ENCODE measurements at regions of chr6 and their contacts with region 1.

Region 1: GRCh38 chr6:70369332-70369950 is 43.9 kb upstream of the FAM135A start:
- DNase-seq: peak; percentile 78
- H3K4me3 ChIP-seq: no peak overlapping the region
- H3K27ac ChIP-seq: no peak overlapping the region
- H3K4me1 ChIP-seq: no peaks in the 10 kb centered on the region
- H3K27me3 ChIP-seq: no peaks in the 10 kb centered on the region
- CTCF ChIP-seq: peak; percentile 68 to 87 (median 74)
- EP300 ChIP-seq: no peak
- POLR2A ChIP-seq: no peak

Region 2: DNA sequence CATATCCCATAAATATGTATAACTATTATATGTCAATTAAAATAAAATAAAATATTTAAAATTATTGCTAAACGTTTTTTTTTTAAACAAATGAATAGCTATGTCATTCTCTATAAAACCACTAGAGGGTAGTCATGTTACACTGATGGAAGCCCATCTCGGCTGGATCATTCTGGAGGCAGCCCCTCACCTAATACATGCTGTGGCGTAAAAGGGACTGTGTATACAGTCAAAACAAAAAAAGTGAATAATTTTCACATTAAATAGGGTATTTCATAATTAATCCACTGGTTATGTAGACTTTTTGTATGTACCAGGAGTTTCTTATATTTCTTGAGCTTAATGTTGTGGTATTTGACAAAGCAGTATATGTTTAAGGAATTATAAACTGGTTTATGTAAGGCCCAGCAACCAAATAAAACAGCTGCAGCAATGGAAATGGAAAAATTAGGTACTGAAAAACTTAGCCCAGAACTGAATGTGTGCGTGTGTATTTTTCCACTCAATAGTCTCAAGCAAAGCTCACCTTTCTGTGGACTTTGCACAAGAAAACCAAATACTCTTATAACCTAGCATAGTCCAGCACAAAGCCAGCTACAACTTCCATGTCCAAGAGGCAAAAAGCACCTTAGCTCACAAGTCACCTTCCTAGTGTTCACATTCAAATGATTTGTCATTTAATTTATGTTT is 148.3 kb before region 1 on chr6:
- intact Hi-C with region 1: loop called (anchors 2 kb)
- DNase-seq: no peak
- H3K4me3 ChIP-seq: no peak overlapping the region
- H3K27ac ChIP-seq: no peak overlapping the region
- H3K4me1 ChIP-seq: no peaks in the 10 kb centered on the region
- H3K27me3 ChIP-seq: no peaks in the 10 kb centered on the region
- CTCF ChIP-seq: peak; percentile 23 to 74 (median 54)
- EP300 ChIP-seq: no peak
- POLR2A ChIP-seq: no peak

Region 3: DNA sequence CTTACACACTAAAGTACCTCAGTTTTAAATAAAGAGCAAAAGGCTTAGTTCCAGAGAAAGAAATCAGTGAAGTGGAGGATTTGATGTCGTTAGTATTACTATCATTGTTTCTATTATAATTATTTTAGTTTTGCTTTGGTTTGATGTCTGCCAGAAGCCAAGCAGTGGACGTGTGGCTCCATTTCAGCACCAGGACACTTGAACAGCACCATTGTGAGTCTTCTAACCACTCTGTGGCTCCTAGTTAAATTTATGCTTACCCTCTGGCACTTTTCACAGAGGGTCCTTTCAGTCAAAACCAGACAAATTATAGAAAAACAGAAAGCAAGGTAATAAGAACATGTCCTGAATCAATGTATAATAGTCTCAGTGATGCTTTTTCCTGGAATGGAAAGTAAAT is 70.0 kb before region 1 on chr6:
- intact Hi-C with region 1: no loop called
- DNase-seq: no peak
- H3K4me3 ChIP-seq: no peak overlapping the region
- H3K27ac ChIP-seq: no peak overlapping the region
- H3K4me1 ChIP-seq: no peaks in the 10 kb centered on the region
- H3K27me3 ChIP-seq: no peaks in the 10 kb centered on the region
- CTCF ChIP-seq: no peak
- EP300 ChIP-seq: no peak
- POLR2A ChIP-seq: no peak

Region 4: GRCh38 chr6:70310063-70310694 is 59.3 kb before region 1 on chr6:
- intact Hi-C with region 1: loop called (anchors 2 kb)
- DNase-seq: no peak
- H3K4me3 ChIP-seq: no peak overlapping the region
- H3K27ac ChIP-seq: no peak overlapping the region
- H3K4me1 ChIP-seq: no peaks in the 10 kb centered on the region
- H3K27me3 ChIP-seq: no peaks in the 10 kb centered on the region
- CTCF ChIP-seq: peak in 2 of 4 experiments; percentile 28 to 44
- EP300 ChIP-seq: no peak
- POLR2A ChIP-seq: no peak

Region 5: GRCh38 chr6:70413114-70413991 is 43.9 kb after region 1 on chr6 and contains the start of gene FAM135A:
- intact Hi-C with region 1: loop called (anchors 5 kb)
- DNase-seq: peak; percentile 99
- H3K4me3 ChIP-seq: peak within 1 kb of the TSS; percentile 85 to 92 (median 90)
- H3K27ac ChIP-seq: peak within 1 kb of the TSS; percentile 89 to 92 (median 90)
- H3K4me1 ChIP-seq: peaks cover 0 to 24% (median 17%) of the 10 kb centered on the region in 4 donors
- H3K27me3 ChIP-seq: no peaks in the 10 kb centered on the region
- CTCF ChIP-seq: no peak
- EP300 ChIP-seq: no peak
- POLR2A ChIP-seq: peak; percentile 11 to 72
- total RNA-seq, gene FAM135A: 21.4 to 31.7 (median 28.1) TPM